ENCODE measurements at regions of chr1 and their contacts with region 1.

Region 1: GRCh38 chr1:109790735-109791494 is 27.2 kb upstream of the EPS8L3 start:
- DNase-seq: peak; percentile 47 to 78 (median 67)
- ATAC-seq: peak; percentile 93
- H3K4me3 ChIP-seq: peak overlapping the region; percentile 1
- H3K4me3 Mint-ChIP-seq: peak overlapping the region in 8 of 10 donors; percentile 26 to 62 (median 40)
- H3K27ac ChIP-seq: peak overlapping the region; percentile 44
- H3K27ac Mint-ChIP-seq: peak overlapping the region in 8 of 9 donors; percentile 49 to 94 (median 84)
- H3K4me1 ChIP-seq: peaks cover 51 to 52% of the 10 kb centered on the region in 2 donors
- H3K4me1 Mint-ChIP-seq: peaks cover 38 to 88% (median 71%) of the 10 kb centered on the region in 7 donors
- H3K27me3 ChIP-seq: no peaks in the 10 kb centered on the region
- H3K27me3 Mint-ChIP-seq: no peaks in the 10 kb centered on the region

Region 2: DNA sequence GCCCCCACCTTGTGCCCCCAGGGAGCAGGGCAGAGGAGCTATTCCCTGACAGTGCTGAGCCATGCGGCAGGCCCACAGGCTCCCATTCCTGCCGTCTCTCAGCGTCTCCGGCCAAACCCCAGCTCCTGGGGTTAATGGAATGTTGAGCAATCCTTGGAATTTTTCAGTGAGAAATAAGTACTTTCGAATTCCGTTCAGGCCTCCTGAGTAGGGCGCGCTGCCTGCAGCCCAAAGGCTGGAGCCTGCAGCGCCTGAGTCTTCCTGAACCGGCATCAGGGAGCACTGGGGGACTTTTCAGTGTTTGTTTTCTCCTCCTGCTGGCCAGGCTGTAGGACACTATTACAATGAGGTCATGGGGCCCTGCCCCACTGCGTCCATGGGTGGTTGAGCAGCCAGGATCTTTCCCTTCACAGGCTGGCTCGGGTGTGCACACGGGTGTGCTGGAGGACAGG is 86.4 kb after region 1 on chr1:
- CTCF ChIA-PET with region 1: no interaction called
- POLR2A ChIA-PET with region 1: no interaction called
- intact Hi-C with region 1: loop called in 1 of 2 experiments (anchors 10 kb)
- DNase-seq: no peak
- ATAC-seq: no peak
- H3K4me3 ChIP-seq: no peak overlapping the region
- H3K4me3 Mint-ChIP-seq: no peak overlapping the region
- H3K27ac ChIP-seq: no peak overlapping the region
- H3K27ac Mint-ChIP-seq: no peak overlapping the region
- H3K4me1 ChIP-seq: no peaks in the 10 kb centered on the region
- H3K4me1 Mint-ChIP-seq: peaks cover 8 to 25% (median 11%) of the 10 kb centered on the region in 7 donors
- H3K27me3 ChIP-seq: no peaks in the 10 kb centered on the region
- H3K27me3 Mint-ChIP-seq: peaks cover 0 to 23% (median 0%) of the 10 kb centered on the region in 5 donors

Region 3: GRCh38 chr1:109910123-109910962 is 119.4 kb after region 1 on chr1 and contains the start of gene CSF1:
- CTCF ChIA-PET with region 1: interaction called, 4 read pairs
- POLR2A ChIA-PET with region 1: interaction called, 8 read pairs
- intact Hi-C with region 1: loop called (anchors 2 kb)
- DNase-seq: peak; percentile 15 to 72 (median 35)
- ATAC-seq: peak; percentile 71
- H3K4me3 ChIP-seq: peak within 1 kb of the TSS; percentile 65
- H3K4me3 Mint-ChIP-seq: peak within 1 kb of the TSS; percentile 78 to 98 (median 88)
- H3K27ac ChIP-seq: peak within 1 kb of the TSS; percentile 43
- H3K27ac Mint-ChIP-seq: peak within 1 kb of the TSS; percentile 38 to 97 (median 73)
- H3K4me1 ChIP-seq: peaks cover 36 to 43% of the 10 kb centered on the region in 2 donors
- H3K4me1 Mint-ChIP-seq: peaks cover 43 to 83% (median 64%) of the 10 kb centered on the region in 7 donors
- H3K27me3 ChIP-seq: no peaks in the 10 kb centered on the region
- H3K27me3 Mint-ChIP-seq: peaks cover 0 to 18% (median 0%) of the 10 kb centered on the region in 5 donors
- total RNA-seq, gene CSF1: 1.4 to 125 (median 5.9) TPM

Region 4: GRCh38 chr1:111497592-111497991 is 1706.7 kb after region 1 on chr1:
- CTCF ChIA-PET with region 1: no interaction called
- POLR2A ChIA-PET with region 1: no interaction called
- intact Hi-C with region 1: no loop called
- DNase-seq: no peak
- ATAC-seq: peak; percentile 42
- H3K4me3 ChIP-seq: no peak overlapping the region
- H3K4me3 Mint-ChIP-seq: peak overlapping the region in 1 of 10 donors; percentile 40
- H3K27ac ChIP-seq: no peak overlapping the region
- H3K27ac Mint-ChIP-seq: peak overlapping the region in 1 of 9 donors; percentile 36
- H3K4me1 ChIP-seq: no peaks in the 10 kb centered on the region
- H3K4me1 Mint-ChIP-seq: peaks cover 6 to 28% (median 13%) of the 10 kb centered on the region in 7 donors
- H3K27me3 ChIP-seq: no peaks in the 10 kb centered on the region
- H3K27me3 Mint-ChIP-seq: peaks cover 0 to 4% (median 0%) of the 10 kb centered on the region in 5 donors